ENCODE measurements at regions of chr20 and their contacts with region 1.

Region 1: DNA sequence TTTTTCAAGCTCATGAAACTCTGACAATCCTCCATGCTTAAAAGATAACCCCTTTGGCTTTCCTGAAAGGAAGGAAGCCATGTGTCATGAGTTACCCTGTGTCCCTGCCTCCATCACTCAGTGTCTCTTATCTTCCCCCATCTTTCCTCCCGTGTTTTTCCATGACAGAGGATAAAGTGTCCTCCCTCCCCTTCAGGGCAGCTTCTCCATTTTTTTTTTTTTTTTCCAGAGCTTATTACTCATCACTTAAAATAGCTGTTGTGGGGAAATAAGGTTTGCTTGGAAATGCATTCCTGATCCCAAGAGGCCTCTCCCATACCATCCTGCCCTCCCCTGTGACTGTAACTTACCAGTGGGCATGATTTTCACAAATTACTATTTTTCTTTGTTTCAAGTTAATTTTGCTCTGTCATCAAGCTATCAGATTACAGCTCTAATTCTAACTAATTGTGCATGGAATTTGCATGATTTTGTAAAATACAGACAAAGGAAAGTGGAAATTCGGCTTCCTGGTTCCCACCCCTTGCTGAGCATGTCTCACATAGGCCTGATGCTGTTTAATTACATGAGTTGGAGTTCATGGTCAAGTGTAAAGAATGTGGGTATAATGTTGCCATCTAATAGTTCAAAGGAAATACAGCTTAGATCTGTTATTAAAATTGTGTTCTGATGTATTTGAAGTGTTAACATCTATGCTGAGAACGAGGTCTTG is 614.5 kb upstream of the FLRT3 start:
- DNase-seq: no peak
- ATAC-seq: no peak
- H3K4me3 ChIP-seq: no peak overlapping the region
- H3K4me3 Mint-ChIP-seq: no peak overlapping the region
- H3K27ac ChIP-seq: no peak overlapping the region
- H3K27ac Mint-ChIP-seq: no peak overlapping the region
- H3K4me1 ChIP-seq: no peaks in the 10 kb centered on the region
- H3K4me1 Mint-ChIP-seq: no peaks in the 10 kb centered on the region
- H3K27me3 ChIP-seq: no peaks in the 10 kb centered on the region
- H3K27me3 Mint-ChIP-seq: no peaks in the 10 kb centered on the region

Region 2: DNA sequence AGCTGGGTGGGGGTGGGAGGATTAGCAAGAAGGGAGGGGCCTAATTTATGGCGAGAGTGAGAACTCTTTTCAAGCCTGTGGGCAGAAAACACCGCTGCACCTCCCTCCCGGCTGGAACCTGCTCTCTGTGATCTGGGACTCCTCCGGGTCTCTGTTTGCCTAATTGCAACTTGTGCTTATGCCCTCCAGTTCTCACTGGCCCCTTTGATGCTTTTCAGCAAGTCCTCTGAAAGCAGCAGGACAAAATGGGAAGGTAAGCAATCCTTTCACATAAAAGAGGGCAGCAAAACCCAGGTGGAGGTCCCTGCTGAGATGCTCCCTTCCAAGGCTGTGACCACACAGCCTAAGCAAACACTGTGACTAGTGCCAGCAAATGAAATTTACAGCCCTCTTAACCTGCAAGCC is 91.5 kb before region 1 on chr20:
- CTCF ChIA-PET with region 1: no interaction called
- POLR2A ChIA-PET with region 1: no interaction called
- intact Hi-C with region 1: loop called in 1 of 2 experiments (anchors 5 kb)
- DNase-seq: no peak
- ATAC-seq: no peak
- H3K4me3 ChIP-seq: no peak overlapping the region
- H3K4me3 Mint-ChIP-seq: no peak overlapping the region
- H3K27ac ChIP-seq: no peak overlapping the region
- H3K27ac Mint-ChIP-seq: no peak overlapping the region
- H3K4me1 ChIP-seq: no peaks in the 10 kb centered on the region
- H3K4me1 Mint-ChIP-seq: no peaks in the 10 kb centered on the region
- H3K27me3 ChIP-seq: no peaks in the 10 kb centered on the region
- H3K27me3 Mint-ChIP-seq: no peaks in the 10 kb centered on the region

Measured in naive thymus-derived CD4-positive, alpha-beta T cell (primary cell).